A673 (cell line): ENCODE measurements at regions of chr1 and their contacts with region 1.

Region 1: DNA sequence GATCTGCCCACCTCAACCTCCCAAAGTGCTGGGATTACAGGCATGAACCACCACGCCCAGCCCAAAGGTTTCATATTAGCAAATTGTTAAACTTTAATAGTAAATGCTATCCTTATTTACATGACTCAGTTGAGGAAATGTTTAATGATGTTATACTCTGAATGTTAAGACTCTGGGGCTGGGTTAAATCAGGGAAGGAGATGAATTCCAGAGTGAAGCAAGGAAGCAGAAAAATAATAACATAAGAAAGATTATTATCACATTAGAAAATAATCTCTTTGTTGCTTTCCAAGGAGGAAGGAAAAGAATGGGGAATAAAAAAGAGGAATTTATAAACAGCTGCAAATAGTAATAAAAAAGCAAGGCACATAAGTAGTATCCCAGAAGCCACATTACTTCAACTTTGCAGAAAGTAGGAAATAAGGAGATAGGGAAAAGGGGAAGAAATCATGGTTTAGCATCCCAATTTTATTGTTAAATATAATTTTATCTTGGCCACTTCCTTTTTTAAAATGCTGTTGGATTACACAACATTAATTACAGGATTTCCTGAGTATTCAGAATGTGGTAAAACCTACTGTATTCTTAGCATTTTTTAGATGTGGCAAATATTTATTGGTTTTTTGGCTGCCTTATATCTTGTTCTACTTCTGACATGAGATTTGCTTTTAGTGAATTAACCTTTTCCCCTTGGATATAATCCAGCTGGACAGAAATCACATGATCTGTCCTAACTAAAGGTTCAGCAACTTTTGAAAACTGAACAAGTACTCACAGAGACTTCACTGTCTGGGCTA is 105.1 kb downstream of the PTGS2 start:
- DNase-seq: peak; percentile 93
- H3K4me3 ChIP-seq: no peak overlapping the region
- H3K27ac ChIP-seq: peak overlapping the region; percentile 73
- H3K4me1 ChIP-seq: peaks cover 45% of the 10 kb centered on the region
- H3K27me3 ChIP-seq: no peaks in the 10 kb centered on the region
- CTCF ChIP-seq: no peak

Region 2: DNA sequence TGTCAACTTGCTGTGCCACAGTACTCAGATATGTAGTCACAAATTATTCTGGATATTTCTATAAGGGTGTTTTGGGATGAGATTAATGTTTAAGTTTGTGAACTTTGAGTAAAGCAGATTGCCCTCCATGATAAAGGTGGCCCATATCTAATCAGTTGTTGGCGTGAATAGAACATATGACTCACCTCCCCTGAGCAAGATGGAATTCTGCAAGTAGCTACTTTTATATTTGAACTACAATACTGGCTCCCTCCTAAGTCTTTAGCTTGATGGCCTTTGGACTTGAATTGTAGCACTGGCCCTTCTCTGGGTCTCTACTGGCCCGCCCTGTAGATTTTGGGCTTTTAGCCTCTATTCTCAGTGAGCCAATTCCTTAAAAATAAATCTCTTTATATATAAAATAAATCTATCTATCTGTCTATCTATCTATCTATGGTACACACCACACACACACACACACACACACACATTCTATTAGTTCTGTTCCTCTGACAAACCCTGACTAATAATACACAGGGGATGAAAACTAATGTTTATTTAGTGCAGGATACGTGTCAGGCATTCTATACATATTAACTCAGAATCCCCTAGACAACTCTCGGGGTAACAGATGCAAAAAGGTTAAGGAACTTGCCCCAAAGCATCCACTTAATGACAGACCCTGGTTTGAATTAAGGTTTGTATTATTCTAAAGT is 76.3 kb before region 1 on chr1:
- CTCF ChIA-PET with region 1: no interaction called
- POLR2A ChIA-PET with region 1: no interaction called
- intact Hi-C with region 1: loop called (anchors 2 kb)
- DNase-seq: peak; percentile 87
- H3K4me3 ChIP-seq: no peak overlapping the region
- H3K27ac ChIP-seq: peak overlapping the region; percentile 2
- H3K4me1 ChIP-seq: peaks cover 28% of the 10 kb centered on the region
- H3K27me3 ChIP-seq: no peaks in the 10 kb centered on the region
- CTCF ChIP-seq: no peak

Region 3: DNA sequence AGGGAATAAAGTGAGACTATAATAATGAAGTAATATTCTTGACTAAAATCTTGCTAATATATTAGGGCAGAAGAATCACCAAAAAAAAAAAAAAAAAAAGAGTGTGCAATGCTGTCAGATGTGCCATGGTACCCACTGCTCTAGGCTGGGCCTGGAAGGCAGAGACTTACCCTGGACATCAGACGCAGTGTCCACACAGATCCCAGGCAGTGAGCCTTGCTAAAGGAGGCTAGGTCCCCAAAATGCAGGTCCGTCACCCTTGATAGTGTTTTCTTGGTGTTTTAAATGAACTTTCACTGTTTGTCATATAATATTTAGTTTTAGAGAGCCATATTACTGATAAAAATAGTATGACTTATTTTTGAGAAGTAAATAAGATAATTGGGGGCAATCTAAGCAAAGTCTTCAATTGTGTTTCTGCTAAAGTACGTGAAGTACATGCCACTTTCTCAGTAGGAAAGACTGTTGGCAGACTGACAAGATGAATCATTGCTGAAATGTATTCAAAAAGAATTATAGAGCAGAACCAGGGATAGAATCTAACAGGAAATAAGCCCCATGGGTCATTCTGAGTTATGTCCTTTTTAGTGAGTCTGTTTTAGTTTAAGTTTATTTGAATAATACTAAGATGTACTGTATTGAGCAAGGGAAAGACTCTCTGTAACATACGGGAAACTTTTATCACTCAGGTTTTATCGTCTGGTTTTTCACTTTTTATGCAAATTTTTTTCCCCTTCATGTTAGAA is 39.6 kb before region 1 on chr1:
- CTCF ChIA-PET with region 1: no interaction called
- POLR2A ChIA-PET with region 1: no interaction called
- intact Hi-C with region 1: loop called (anchors 1 kb)
- DNase-seq: peak; percentile 99
- H3K4me3 ChIP-seq: peak overlapping the region; percentile 14
- H3K27ac ChIP-seq: peak overlapping the region; percentile 80
- H3K4me1 ChIP-seq: peaks cover 36% of the 10 kb centered on the region
- H3K27me3 ChIP-seq: no peaks in the 10 kb centered on the region
- CTCF ChIP-seq: no peak